Adrenal gland (tissue), 19 donors: ENCODE measurements at regions of chrX and their contacts with region 1.

Region 1: GRCh38 chrX:132292793-132293192 is 73.5 kb upstream of the RAP2C start:
- DNase-seq: peak; percentile 20 to 58 (median 26)
- H3K4me3 ChIP-seq: no peak overlapping the region
- H3K27ac ChIP-seq: no peak overlapping the region
- H3K4me1 ChIP-seq: no peaks in the 10 kb centered on the region
- H3K27me3 ChIP-seq: peaks cover 3% of the 10 kb centered on the region
- CTCF ChIP-seq: peak; percentile 54 to 74 (median 68)
- POLR2A ChIP-seq: no peak

Region 2: DNA sequence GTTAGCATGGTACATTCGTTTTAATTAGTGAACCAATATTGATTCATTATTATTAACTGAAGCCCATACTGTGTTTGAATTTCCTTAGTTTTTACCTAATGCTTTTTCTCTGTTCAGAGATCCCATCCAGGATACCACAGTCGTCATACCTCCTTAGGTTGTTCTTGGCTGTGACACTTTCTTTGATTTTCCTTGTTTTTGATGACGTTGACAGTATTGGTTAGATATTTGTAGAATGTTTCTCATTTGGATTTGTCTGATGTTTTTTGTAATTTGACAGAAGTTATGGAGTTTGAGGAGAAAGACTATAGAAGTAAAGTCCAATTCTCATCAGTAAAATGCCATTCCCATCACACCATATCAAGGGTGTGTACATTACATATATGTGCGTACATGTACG is 57.3 kb before region 1 on chrX:
- intact Hi-C with region 1: no loop called
- DNase-seq: no peak
- H3K4me3 ChIP-seq: no peak overlapping the region
- H3K27ac ChIP-seq: no peak overlapping the region
- H3K4me1 ChIP-seq: no peaks in the 10 kb centered on the region
- H3K27me3 ChIP-seq: peaks cover 3% of the 10 kb centered on the region
- CTCF ChIP-seq: no peak
- POLR2A ChIP-seq: no peak

Region 3: DNA sequence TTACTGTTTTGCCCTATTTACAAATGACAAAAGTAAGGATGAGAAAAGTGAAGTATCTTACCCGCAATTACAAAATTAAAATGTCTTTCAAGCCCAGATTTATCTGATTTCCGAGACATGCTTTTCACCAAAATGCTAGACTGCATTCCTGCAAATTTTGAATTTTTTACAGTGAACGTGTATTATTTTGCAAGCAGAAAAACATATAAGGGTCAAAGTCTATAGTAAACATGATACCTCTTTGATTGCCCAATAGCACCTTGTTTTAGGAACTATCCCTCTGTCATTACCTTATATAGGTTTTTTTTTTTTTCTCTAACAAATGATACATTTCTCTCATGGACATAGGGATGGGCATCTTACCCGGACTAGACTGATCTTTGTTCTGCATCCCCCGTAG is 60.6 kb after region 1 on chrX:
- intact Hi-C with region 1: no loop called
- DNase-seq: no peak
- H3K4me3 ChIP-seq: no peak overlapping the region
- H3K27ac ChIP-seq: no peak overlapping the region
- H3K4me1 ChIP-seq: no peaks in the 10 kb centered on the region
- H3K27me3 ChIP-seq: no peaks in the 10 kb centered on the region
- CTCF ChIP-seq: no peak
- POLR2A ChIP-seq: no peak

Region 4: GRCh38 chrX:132609394-132609793 is 316.6 kb after region 1 on chrX:
- intact Hi-C with region 1: loop called (anchors 5 to 10 kb)
- DNase-seq: no peak
- H3K4me3 ChIP-seq: no peak overlapping the region
- H3K27ac ChIP-seq: no peak overlapping the region
- H3K4me1 ChIP-seq: no peaks in the 10 kb centered on the region
- H3K27me3 ChIP-seq: no peaks in the 10 kb centered on the region
- CTCF ChIP-seq: no peak
- POLR2A ChIP-seq: no peak